ENCODE measurements at regions of chr20 and their contacts with region 1.

Region 1: GRCh38 chr20:44115762-44116644 is 71.0 kb downstream of the JPH2 start:
- DNase-seq: no peak
- H3K4me3 ChIP-seq: no peak overlapping the region
- H3K27ac ChIP-seq: no peak overlapping the region
- H3K4me1 ChIP-seq: peaks cover 0 to 3% (median 0%) of the 10 kb centered on the region in 4 experiments
- H3K27me3 ChIP-seq: peaks cover 0 to 38% (median 21%) of the 10 kb centered on the region in 5 experiments

Region 2: DNA sequence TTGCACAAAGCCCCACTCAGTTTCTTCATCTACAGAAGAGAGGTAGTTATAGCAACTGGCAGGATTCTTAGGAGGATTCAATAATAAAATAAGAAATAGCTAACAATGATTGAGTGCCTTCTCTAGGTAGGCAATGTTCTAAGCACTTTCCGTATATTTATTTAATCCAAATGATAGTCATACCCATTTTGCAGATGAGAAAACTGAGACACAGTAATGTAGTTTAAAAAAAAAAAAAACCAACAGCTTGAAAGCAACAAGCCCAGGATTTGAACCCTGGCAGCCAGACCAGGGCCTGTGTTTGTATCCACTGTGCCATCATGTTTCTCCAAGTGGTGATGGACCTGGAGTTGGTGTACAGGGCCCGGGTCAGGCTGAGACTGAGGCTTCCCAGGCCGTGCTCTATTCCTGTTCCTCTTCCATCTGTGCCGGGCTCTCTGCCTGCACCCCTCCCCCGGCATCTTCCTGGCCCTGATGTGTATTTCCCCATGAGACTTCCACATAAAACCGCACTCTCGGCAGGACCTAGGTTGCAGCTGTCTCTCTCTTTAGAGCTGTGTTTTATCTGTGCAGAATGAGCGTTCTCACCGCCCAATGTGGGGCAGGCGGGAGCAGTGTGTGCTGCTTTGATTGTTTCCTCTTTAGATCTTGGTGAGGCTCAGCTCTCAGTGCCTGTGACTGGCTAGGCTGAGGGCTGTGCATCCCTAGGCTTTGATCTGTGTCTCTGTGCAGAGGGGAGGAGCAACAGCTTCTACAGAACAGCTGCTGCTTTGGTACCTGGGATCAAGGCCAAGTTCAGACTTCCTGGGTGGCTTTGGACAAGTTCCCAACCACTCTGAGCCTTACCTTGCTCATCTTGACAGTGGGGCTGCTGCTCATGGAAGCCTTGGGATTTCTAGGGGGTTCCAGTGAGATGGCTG is 151.9 kb before region 1 on chr20:
- CTCF ChIA-PET with region 1: no interaction called
- POLR2A ChIA-PET with region 1: no interaction called
- DNase-seq: peak; percentile 49 to 85 (median 80)
- H3K4me3 ChIP-seq: no peak overlapping the region
- H3K27ac ChIP-seq: no peak overlapping the region
- H3K4me1 ChIP-seq: peaks cover 0 to 14% (median 6%) of the 10 kb centered on the region in 4 experiments
- H3K27me3 ChIP-seq: peaks cover 0 to 74% (median 32%) of the 10 kb centered on the region in 5 experiments

Region 3: GRCh38 chr20:44196271-44196670 is 80.3 kb after region 1 on chr20:
- CTCF ChIA-PET with region 1: interaction called, 71 read pairs
- POLR2A ChIA-PET with region 1: no interaction called
- DNase-seq: peak; percentile 35 to 75 (median 63)
- H3K4me3 ChIP-seq: no peak overlapping the region
- H3K27ac ChIP-seq: no peak overlapping the region
- H3K4me1 ChIP-seq: peaks cover 3 to 15% (median 8%) of the 10 kb centered on the region in 4 experiments
- H3K27me3 ChIP-seq: peaks cover 0 to 2% (median 0%) of the 10 kb centered on the region in 5 experiments